ENCODE measurements at regions of chr12 and their contacts with region 1.

Region 1: DNA sequence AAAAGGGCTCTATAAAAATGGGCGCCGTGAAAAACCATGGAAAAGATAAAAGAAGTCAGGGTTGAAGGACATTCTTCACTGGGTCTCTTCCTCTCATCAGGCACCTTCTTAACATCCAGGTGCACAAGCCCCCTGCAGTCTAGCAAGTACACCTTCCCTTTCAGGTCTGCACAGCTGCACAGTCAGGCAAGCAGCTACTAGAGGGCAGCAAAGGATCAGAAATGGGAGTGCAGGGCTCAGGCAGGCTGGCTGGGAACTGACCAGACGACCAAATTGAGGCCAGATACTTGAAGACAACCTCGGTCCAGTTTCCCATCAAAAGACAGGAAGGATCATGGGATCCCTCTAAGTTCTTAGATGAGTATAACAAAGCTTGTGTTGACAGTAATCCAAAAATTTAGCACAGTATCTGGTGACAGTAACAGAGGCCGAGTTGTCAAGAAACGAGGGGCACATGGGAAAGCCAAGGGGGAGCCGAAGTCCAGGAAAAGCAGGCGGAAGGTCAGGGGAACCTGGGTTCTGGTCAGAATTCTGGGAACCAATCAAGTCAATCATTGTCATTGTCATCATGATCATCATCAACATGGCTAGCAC is 10.1 kb upstream of the GRIP1 start:
- DNase-seq: peak; percentile 39
- CTCF ChIP-seq: peak; percentile 90

Region 2: DNA sequence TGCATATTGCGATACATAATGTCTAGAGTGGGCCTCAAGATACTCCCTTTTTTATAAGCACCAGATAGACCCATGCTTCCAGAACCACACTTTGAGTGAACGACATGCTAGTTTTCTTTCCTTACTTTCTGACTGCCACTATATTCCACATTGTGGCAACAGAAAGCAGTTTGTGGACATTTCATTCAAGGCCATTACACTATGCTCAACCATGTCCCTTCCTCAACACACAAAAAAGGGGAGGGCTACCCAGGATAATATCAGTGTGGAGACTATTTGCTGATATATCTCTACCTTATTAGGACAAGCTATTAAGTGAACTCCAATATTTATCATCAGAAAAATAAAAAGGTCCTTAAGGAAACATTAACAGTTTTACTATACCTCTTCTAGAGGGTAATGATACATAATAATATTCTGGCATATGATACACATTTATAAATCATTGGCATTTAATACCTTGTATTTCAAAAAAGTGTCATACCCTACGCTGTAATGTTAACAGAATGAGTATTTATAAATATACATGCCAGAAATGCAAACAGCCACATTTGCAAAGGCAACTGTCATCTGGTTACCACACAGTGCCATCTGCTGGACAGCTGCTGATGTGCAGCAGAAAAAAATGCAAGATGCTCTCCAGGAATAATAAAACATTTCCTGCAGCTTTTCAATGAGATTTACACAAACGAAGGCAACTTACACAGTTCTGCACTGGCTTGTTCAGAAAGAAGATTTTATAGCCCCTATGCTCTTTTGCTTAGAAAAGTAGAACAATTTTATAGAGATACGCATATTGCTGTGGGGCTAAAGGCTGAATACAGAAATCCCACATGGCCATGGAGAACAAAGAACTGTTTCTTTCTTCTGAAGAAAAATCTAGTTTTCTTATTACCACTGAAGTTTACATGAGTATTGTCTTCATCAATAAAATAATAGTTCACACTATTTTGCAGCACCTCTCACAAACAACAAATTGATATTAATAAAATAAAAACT is 172.1 kb after region 1 on chr12:
- CTCF ChIA-PET with region 1: interaction called, 17 read pairs
- POLR2A ChIA-PET with region 1: no interaction called
- DNase-seq: peak; percentile 20
- CTCF ChIP-seq: peak; percentile 96

Measured in GM10248 (cell line).